Natural killer cell (primary cell): ENCODE measurements at regions of chr1 and their contacts with region 1.

Region 1: DNA sequence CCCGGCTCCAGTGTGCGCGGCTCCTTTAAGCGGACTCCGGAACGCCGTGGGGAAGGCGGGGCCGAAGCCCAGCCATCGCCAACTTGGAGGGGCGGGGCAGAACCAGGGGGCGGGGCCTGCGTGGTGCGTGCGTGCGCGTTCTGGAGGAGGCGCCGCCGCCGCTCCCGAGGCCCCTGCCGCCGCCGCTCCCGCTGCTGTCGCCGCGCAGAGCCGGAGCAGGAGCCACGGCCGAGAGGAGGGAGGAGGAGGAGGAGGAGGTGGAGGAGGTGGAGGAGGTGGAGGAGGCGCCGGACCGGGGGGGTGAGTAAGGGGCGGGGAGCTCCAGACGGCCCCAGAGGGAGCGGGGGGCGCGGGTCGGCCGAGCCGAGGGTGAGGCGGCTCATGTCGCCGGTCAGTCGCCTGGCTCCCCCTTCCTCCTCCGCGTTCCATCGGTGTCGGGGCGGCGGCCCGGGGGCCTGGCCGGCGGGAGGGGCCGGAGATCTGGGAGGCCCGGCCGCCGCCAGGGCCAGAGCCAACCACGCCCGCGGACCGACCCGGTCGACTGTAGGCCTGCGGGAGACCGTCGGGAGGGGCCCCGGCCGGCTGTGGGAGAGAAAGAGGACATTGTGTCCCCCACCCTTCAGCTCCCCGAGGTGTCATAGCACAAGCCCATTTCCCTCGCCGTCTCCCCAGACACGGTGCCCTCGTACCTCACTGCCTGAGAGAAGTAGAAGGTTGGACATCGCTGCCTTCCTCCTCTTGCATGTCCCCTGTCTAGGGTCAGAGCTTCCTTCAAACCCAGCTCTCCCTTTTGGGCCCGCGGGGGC is at the start of gene RAP1A:
- DNase-seq: peak; percentile 91 to 95
- ATAC-seq: peak; percentile 82 to 94 (median 89)
- H3K4me3 ChIP-seq: peak within 1 kb of the TSS; percentile 64
- H3K4me3 Mint-ChIP-seq: peak within 1 kb of the TSS; percentile 92
- H3K27ac ChIP-seq: peak within 1 kb of the TSS; percentile 79
- H3K27ac Mint-ChIP-seq: peak within 1 kb of the TSS; percentile 84 to 95
- H3K4me1 ChIP-seq: peaks cover 48% of the 10 kb centered on the region
- H3K4me1 Mint-ChIP-seq: peaks cover 64 to 71% of the 10 kb centered on the region in 2 donors
- H3K27me3 ChIP-seq: no peaks in the 10 kb centered on the region
- H3K27me3 Mint-ChIP-seq: no peaks in the 10 kb centered on the region
- CTCF ChIP-seq: no peak
- total RNA-seq, gene RAP1A: 83.7 to 112 (median 104) TPM

Region 2: GRCh38 chr1:111592389-111593361 is 27.2 kb before region 1 on chr1:
- intact Hi-C with region 1: loop called (anchors 1 kb)
- DNase-seq: peak; percentile 75 to 91
- ATAC-seq: peak; percentile 85 to 92 (median 92)
- H3K4me3 ChIP-seq: no peak overlapping the region
- H3K4me3 Mint-ChIP-seq: peak overlapping the region; percentile 77
- H3K27ac ChIP-seq: peak overlapping the region; percentile 86
- H3K27ac Mint-ChIP-seq: peak overlapping the region; percentile 78 to 89
- H3K4me1 ChIP-seq: peaks cover 54% of the 10 kb centered on the region
- H3K4me1 Mint-ChIP-seq: peaks cover 54% of the 10 kb centered on the region in 2 donors
- H3K27me3 ChIP-seq: no peaks in the 10 kb centered on the region
- H3K27me3 Mint-ChIP-seq: no peaks in the 10 kb centered on the region
- CTCF ChIP-seq: no peak

Region 3: DNA sequence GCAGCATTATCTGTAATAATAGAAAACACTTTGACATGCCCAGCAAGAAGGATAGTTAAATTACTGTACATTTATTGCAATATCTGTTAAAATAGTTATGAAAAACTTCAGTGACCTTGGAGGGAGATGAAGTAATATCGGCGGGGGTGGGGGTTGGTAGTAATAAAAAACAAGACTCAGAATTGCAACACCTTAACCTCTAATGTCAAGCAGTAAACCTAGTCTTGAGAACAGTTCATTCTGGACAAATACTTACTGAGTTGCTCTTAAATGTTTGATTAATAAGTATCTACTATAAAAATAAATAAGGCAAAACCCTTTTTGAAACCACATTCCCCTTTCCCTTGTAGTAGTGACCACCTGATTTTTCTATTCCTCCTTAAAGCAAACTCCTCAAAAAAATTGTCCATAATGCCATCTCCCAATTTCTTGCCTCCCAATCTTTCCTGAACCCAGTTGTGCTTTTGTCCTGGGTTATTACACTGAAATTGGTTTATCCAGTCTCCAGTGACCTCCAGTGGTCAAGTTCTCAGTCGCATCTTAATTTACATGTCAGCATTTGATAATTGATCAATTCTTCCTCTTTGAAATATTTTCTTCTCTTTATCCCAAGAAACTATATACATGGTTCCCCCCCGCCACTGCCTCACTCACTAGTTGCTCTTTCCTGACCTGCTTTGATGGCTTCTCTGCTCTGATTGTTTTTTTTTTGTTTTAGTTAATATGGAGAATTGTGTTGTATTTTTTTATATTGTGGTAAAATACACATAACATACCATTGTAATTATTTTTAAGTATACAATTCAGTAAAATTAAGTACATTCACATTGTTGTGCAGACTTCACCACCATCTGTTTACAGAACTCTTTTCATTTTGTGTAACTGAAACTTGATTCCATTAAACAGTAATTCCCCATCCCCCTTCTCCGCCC is 36.5 kb after region 1 on chr1:
- intact Hi-C with region 1: loop called (anchors 5 kb)
- DNase-seq: peak in 1 of 2 donors; percentile 72
- ATAC-seq: peak in 2 of 3 donors; percentile 36 to 50
- H3K4me3 ChIP-seq: no peak overlapping the region
- H3K4me3 Mint-ChIP-seq: no peak overlapping the region
- H3K27ac ChIP-seq: no peak overlapping the region
- H3K27ac Mint-ChIP-seq: peak overlapping the region; percentile 24 to 65
- H3K4me1 ChIP-seq: peaks cover 9% of the 10 kb centered on the region
- H3K4me1 Mint-ChIP-seq: peaks cover 31 to 44% of the 10 kb centered on the region in 2 donors
- H3K27me3 ChIP-seq: no peaks in the 10 kb centered on the region
- H3K27me3 Mint-ChIP-seq: no peaks in the 10 kb centered on the region
- CTCF ChIP-seq: peak; percentile 60